AG04450 (cell line): ENCODE measurements at regions of chr19 and their contacts with region 1.

Region 1: GRCh38 chr19:42529248-42529764 is 1.0 kb upstream of the CEACAM1 start:
- DNase-seq: no peak
- H3K4me3 ChIP-seq: no peak overlapping the region
- H3K27ac ChIP-seq: no peak overlapping the region
- H3K27me3 ChIP-seq: peaks cover 16% of the 10 kb centered on the region
- CTCF ChIP-seq: peak; percentile 87

Region 2: GRCh38 chr19:42450314-42450934 is 78.9 kb before region 1 on chr19:
- CTCF ChIA-PET with region 1: interaction called, 44 read pairs
- POLR2A ChIA-PET with region 1: no interaction called
- DNase-seq: peak; percentile 58
- H3K4me3 ChIP-seq: no peak overlapping the region
- H3K27ac ChIP-seq: no peak overlapping the region
- H3K27me3 ChIP-seq: peaks cover 17% of the 10 kb centered on the region
- CTCF ChIP-seq: peak; percentile 87